ENCODE measurements at regions of chr10 and their contacts with region 1.

Region 1: GRCh38 chr10:27241652-27242472 is 1.3 kb upstream of the ACBD5 start:
- DNase-seq: peak; percentile 72 to 95 (median 91)

Region 2: DNA sequence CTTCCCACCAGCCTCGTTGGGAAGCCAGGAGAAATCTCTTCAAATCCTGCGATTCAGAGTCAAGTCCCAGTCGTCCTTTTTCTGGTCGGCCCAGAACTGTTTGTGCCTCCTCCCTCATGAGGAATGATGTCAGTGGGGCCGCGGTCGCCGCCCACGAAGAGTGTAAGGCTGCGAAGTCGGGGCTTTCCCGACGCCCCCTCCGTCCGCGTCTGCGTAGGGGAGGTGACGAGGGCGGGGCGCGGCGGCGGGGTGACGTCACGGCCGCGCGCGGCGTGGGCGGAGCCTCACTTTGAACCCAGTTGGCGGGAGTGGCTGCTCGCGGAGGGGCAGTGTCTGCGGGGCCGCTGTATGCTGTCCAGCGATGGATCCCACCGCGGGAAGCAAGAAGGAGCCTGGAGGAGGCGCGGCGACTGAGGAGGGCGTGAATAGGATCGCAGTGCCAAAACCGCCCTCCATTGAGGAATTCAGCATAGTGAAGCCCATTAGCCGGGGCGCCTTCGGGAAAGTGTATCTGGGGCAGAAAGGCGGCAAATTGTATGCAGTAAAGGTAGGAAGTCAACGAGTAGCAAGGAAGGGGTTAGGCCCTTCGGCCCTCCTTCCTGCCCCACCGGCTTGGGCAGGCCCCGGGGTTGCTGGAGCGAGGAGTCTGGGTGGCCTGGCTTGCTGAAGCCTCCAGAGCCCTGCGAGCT is 86.7 kb before region 1 on chr10 and contains the start of gene MASTL:
- intact Hi-C with region 1: loop called (anchors 2 kb)
- DNase-seq: peak; percentile 82 to 97 (median 92)

Region 3: DNA sequence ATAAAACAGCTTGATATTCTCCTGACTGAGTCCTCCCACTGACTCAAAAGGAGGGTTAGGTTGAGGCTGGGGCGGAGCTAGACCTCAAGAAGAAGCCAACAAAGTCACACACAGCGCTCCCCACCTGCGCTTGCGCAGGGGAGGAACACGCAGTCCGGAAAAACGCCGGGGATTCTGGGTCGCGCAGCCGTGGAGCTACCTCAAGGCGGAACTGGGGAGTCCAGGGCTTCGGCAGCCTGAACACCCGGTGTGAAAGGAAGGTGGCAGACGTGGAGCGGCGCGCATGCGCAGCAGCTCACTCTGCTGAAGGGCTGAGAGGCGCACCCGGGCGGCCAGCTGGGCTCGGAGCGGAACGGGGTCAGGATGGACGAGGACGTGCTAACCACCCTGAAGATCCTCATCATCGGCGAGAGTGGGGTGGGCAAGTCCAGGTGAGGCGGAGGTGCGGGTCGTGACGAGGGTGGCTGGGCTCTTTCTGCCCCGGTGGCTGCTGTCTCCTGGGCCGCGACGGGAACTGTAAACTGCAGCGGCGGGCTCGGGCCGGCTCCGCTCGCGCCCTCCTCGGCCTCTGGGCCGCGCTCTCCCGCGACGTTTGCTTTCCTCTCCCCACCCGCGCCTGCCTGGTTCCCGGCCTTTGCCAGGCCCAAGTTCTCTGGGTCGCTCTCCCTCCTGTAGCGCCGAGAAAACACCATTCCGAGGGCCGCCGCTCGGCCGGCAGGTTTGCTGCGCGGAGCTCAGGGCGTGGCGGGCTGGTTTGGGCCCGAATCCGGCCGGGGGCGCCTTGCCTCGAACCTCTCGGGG is 262.3 kb after region 1 on chr10 and contains the start of gene RAB18:
- intact Hi-C with region 1: loop called (anchors 5 kb)
- DNase-seq: peak; percentile 89 to 98 (median 96)